CD8-positive, alpha-beta T cell (primary cell): ENCODE measurements at regions of chr4 and their contacts with region 1.

Region 1: GRCh38 chr4:148044912-148045352 is 313.0 kb downstream of the ARHGAP10 start:
- DNase-seq: peak in 2 of 9 experiments; percentile 51 to 60
- ATAC-seq: peak; percentile 72
- H3K4me3 ChIP-seq: no peak overlapping the region
- H3K4me3 Mint-ChIP-seq: no peak overlapping the region
- H3K27ac ChIP-seq: no peak overlapping the region
- H3K27ac Mint-ChIP-seq: no peak overlapping the region
- H3K4me1 ChIP-seq: peaks cover 8% of the 10 kb centered on the region
- H3K4me1 Mint-ChIP-seq: peaks cover 31% of the 10 kb centered on the region
- H3K27me3 ChIP-seq: no peaks in the 10 kb centered on the region
- H3K27me3 Mint-ChIP-seq: no peaks in the 10 kb centered on the region
- CTCF ChIP-seq: peak; percentile 32

Region 2: DNA sequence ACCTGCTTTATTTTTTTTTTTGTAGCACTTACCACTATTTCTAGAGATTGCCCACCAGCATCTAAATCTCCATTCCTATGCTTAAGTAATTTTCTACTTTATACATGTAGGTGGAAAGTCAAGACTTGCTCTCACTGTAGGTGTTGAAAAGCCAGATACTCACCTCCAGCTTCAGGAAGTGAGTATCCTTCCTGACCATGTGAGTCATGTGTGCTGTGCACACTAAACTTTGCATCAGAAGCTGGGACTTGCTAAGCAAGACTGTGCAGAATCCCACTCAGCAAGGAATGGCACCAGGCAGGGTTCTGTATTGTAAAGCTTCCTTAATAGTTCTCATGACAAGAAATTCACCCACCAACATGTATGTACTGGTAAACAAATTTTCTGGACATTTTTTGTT is 1254.4 kb before region 1 on chr4:
- CTCF ChIA-PET with region 1: no interaction called
- POLR2A ChIA-PET with region 1: no interaction called
- intact Hi-C with region 1: no loop called
- DNase-seq: no peak
- ATAC-seq: no peak
- H3K4me3 ChIP-seq: no peak overlapping the region
- H3K4me3 Mint-ChIP-seq: no peak overlapping the region
- H3K27ac ChIP-seq: no peak overlapping the region
- H3K27ac Mint-ChIP-seq: no peak overlapping the region
- H3K4me1 ChIP-seq: no peaks in the 10 kb centered on the region
- H3K4me1 Mint-ChIP-seq: no peaks in the 10 kb centered on the region
- H3K27me3 ChIP-seq: no peaks in the 10 kb centered on the region
- H3K27me3 Mint-ChIP-seq: peaks cover 2% of the 10 kb centered on the region
- CTCF ChIP-seq: no peak

Region 3: GRCh38 chr4:148025981-148026380 is 19.0 kb before region 1 on chr4:
- CTCF ChIA-PET with region 1: interaction called, 5 read pairs
- POLR2A ChIA-PET with region 1: no interaction called
- intact Hi-C with region 1: loop called in 1 of 2 experiments (anchors 2 kb)
- DNase-seq: no peak
- ATAC-seq: no peak
- H3K4me3 ChIP-seq: no peak overlapping the region
- H3K4me3 Mint-ChIP-seq: no peak overlapping the region
- H3K27ac ChIP-seq: no peak overlapping the region
- H3K27ac Mint-ChIP-seq: no peak overlapping the region
- H3K4me1 ChIP-seq: no peaks in the 10 kb centered on the region
- H3K4me1 Mint-ChIP-seq: peaks cover 2% of the 10 kb centered on the region
- H3K27me3 ChIP-seq: no peaks in the 10 kb centered on the region
- H3K27me3 Mint-ChIP-seq: no peaks in the 10 kb centered on the region
- CTCF ChIP-seq: no peak

Region 4: DNA sequence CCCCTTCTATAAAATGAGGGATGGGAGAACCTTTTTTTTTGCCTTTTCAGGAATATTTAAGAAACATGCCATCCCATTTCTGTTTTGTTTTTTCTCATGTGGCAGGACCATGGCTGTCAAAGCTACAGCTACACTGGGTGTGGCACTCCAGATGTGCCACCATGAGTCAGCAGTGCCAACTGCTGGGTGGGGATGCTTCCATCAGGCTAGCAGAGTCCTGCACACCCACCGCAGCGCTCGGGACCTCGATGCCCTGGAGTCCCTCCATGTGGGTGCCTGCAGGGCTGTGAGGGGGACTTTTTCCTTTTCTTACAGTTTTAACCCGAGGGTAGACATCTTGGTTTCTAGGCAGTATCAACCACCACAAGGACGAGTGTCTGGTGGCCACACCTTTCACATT is 44.7 kb after region 1 on chr4:
- CTCF ChIA-PET with region 1: interaction called, 4 read pairs
- POLR2A ChIA-PET with region 1: no interaction called
- intact Hi-C with region 1: loop called in 1 of 2 experiments (anchors 5 kb)
- DNase-seq: no peak
- ATAC-seq: no peak
- H3K4me3 ChIP-seq: no peak overlapping the region
- H3K4me3 Mint-ChIP-seq: no peak overlapping the region
- H3K27ac ChIP-seq: no peak overlapping the region
- H3K27ac Mint-ChIP-seq: no peak overlapping the region
- H3K4me1 ChIP-seq: no peaks in the 10 kb centered on the region
- H3K4me1 Mint-ChIP-seq: peaks cover 46% of the 10 kb centered on the region
- H3K27me3 ChIP-seq: no peaks in the 10 kb centered on the region
- H3K27me3 Mint-ChIP-seq: no peaks in the 10 kb centered on the region
- CTCF ChIP-seq: no peak

Region 5: GRCh38 chr4:148152871-148153625 is 108.1 kb after region 1 on chr4:
- CTCF ChIA-PET with region 1: interaction called, 3 read pairs
- POLR2A ChIA-PET with region 1: no interaction called
- intact Hi-C with region 1: loop called in 1 of 2 experiments (anchors 10 kb)
- DNase-seq: peak in 1 of 9 experiments; percentile 19
- ATAC-seq: no peak
- H3K4me3 ChIP-seq: no peak overlapping the region
- H3K4me3 Mint-ChIP-seq: no peak overlapping the region
- H3K27ac ChIP-seq: no peak overlapping the region
- H3K27ac Mint-ChIP-seq: no peak overlapping the region
- H3K4me1 ChIP-seq: no peaks in the 10 kb centered on the region
- H3K4me1 Mint-ChIP-seq: peaks cover 2% of the 10 kb centered on the region
- H3K27me3 ChIP-seq: no peaks in the 10 kb centered on the region
- H3K27me3 Mint-ChIP-seq: no peaks in the 10 kb centered on the region
- CTCF ChIP-seq: no peak

Region 6: GRCh38 chr4:148170408-148171365 is 125.8 kb after region 1 on chr4:
- CTCF ChIA-PET with region 1: interaction called, 4 read pairs
- POLR2A ChIA-PET with region 1: no interaction called
- intact Hi-C with region 1: loop called in 1 of 2 experiments (anchors 10 kb)
- DNase-seq: peak in 3 of 9 experiments; percentile 18 to 38 (median 26)
- ATAC-seq: peak; percentile 61
- H3K4me3 ChIP-seq: no peak overlapping the region
- H3K4me3 Mint-ChIP-seq: no peak overlapping the region
- H3K27ac ChIP-seq: no peak overlapping the region
- H3K27ac Mint-ChIP-seq: peak overlapping the region; percentile 28
- H3K4me1 ChIP-seq: peaks cover 5% of the 10 kb centered on the region
- H3K4me1 Mint-ChIP-seq: peaks cover 22% of the 10 kb centered on the region
- H3K27me3 ChIP-seq: no peaks in the 10 kb centered on the region
- H3K27me3 Mint-ChIP-seq: no peaks in the 10 kb centered on the region
- CTCF ChIP-seq: no peak

Region 7: DNA sequence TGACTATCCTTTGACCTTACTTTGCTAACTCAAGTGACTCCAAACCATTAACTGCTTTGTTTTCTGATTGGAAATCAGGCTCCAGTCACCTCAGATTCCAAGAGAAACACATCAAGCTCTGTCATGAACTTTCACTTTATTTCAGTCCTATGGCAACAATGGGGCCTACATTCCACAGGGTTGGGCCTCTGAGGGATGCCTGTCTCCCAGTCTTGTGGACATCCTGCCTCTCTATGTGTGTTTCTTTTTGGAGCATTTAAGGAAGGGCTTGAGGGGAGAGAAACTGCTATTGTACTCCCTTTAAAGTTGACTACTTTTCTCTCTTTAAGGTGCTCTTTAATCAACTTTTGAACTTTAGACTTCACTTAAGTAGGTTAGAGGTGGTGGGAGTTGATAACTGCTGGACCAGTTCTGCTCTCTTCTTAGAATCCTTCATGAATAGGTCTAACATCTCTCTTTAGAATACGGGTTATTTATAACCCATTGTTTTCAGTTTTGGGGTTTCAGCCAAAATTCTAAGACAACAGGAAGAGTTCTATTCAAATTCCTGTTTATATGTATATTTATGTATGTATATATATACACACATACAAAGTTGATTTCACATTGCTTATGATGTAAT is 671.6 kb after region 1 on chr4:
- CTCF ChIA-PET with region 1: no interaction called
- POLR2A ChIA-PET with region 1: no interaction called
- intact Hi-C with region 1: no loop called
- DNase-seq: no peak
- ATAC-seq: no peak
- H3K4me3 ChIP-seq: no peak overlapping the region
- H3K4me3 Mint-ChIP-seq: no peak overlapping the region
- H3K27ac ChIP-seq: no peak overlapping the region
- H3K27ac Mint-ChIP-seq: no peak overlapping the region
- H3K4me1 ChIP-seq: no peaks in the 10 kb centered on the region
- H3K4me1 Mint-ChIP-seq: no peaks in the 10 kb centered on the region
- H3K27me3 ChIP-seq: no peaks in the 10 kb centered on the region
- H3K27me3 Mint-ChIP-seq: no peaks in the 10 kb centered on the region
- CTCF ChIP-seq: no peak

Region 8: DNA sequence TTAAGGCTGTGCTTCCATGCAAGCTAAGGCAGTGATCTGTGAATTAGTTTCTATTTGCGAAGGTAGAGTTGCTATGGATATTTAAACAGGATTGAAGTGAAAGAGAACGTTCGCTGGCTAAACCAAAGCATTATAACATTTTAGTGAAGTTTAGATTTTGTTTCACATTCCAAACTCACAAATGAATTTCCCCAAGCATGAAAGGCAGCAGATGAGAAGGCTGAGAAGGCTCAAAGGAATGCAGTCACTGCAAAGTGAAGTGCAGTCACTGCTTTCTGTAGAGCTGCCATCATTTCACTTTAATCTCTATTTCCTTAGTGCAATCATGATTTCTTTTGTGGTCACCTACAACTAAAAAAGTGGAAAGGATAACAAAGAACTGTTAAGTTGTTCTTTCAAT is 732.0 kb after region 1 on chr4:
- CTCF ChIA-PET with region 1: no interaction called
- POLR2A ChIA-PET with region 1: no interaction called
- intact Hi-C with region 1: loop called in 1 of 2 experiments (anchors 10 kb)
- DNase-seq: no peak
- ATAC-seq: no peak
- H3K4me3 ChIP-seq: no peak overlapping the region
- H3K4me3 Mint-ChIP-seq: no peak overlapping the region
- H3K27ac ChIP-seq: no peak overlapping the region
- H3K27ac Mint-ChIP-seq: no peak overlapping the region
- H3K4me1 ChIP-seq: no peaks in the 10 kb centered on the region
- H3K4me1 Mint-ChIP-seq: no peaks in the 10 kb centered on the region
- H3K27me3 ChIP-seq: no peaks in the 10 kb centered on the region
- H3K27me3 Mint-ChIP-seq: no peaks in the 10 kb centered on the region
- CTCF ChIP-seq: no peak